Naive thymus-derived CD4-positive, alpha-beta T cell (primary cell): ENCODE measurements at regions of chr5 and their contacts with region 1.

Region 1: DNA sequence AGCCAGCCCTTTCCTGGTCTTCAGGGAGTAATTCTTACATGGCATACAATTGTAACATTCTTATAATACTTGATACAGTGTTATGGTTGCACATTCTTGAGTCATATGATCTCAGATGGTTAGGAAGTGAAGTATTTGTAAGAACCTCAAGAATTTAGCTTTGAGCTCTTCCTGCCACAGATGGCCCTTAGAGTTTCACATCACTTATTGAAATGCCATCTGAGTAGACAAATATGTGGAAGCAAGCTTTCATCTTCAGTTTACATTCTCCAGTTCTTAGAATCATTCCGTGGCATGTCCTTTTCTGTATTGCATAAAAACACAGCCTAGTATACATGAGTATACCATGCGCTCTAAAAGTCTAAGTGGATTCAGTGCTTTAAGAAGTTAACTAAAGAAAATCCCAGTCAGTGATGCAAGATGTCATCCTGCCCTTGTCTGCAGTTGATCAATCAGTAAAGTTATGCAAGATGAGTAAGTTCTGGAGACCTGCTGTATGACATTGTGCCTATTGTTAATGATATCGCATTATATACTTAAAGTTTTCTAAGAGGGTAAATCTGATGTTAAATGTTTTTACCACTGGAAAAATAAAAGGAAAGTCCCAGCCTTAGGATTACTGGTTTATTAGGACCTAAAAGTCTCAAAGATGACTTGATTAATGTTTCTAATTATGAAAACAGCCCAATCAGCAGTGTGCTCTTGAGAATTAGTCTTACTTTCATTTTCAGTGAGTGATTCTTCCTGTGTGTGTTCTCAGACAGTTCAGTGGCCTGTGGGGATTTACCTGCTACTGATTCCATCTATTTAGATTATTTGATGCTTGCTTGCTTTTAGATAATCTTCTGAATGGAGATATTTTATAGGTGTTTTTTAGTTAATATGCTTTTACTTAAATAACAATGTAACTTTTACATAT is 29.4 kb downstream of the RHOBTB3 start:
- DNase-seq: peak in 7 of 9 donors; percentile 3 to 45 (median 32)
- ATAC-seq: peak; percentile 83
- H3K4me3 ChIP-seq: peak overlapping the region; percentile 50
- H3K4me3 Mint-ChIP-seq: peak overlapping the region; percentile 70 to 86 (median 82)
- H3K27ac ChIP-seq: peak overlapping the region; percentile 58
- H3K27ac Mint-ChIP-seq: peak overlapping the region; percentile 75 to 92 (median 90)
- H3K4me1 ChIP-seq: peaks cover 0 to 27% of the 10 kb centered on the region in 2 donors
- H3K4me1 Mint-ChIP-seq: peaks cover 11 to 46% (median 32%) of the 10 kb centered on the region in 7 donors
- H3K27me3 ChIP-seq: no peaks in the 10 kb centered on the region
- H3K27me3 Mint-ChIP-seq: peaks cover 0 to 44% (median 0%) of the 10 kb centered on the region in 5 donors

Region 2: GRCh38 chr5:95718203-95718602 is 42.3 kb before region 1 on chr5:
- CTCF ChIA-PET with region 1: no interaction called
- POLR2A ChIA-PET with region 1: interaction called, 3 read pairs
- intact Hi-C with region 1: loop called in 1 of 2 experiments (anchors 5 kb)
- DNase-seq: peak in 6 of 9 donors; percentile 21 to 60 (median 40)
- ATAC-seq: peak; percentile 94
- H3K4me3 ChIP-seq: no peak overlapping the region
- H3K4me3 Mint-ChIP-seq: no peak overlapping the region
- H3K27ac ChIP-seq: no peak overlapping the region
- H3K27ac Mint-ChIP-seq: no peak overlapping the region
- H3K4me1 ChIP-seq: peaks cover 9 to 22% of the 10 kb centered on the region in 2 donors
- H3K4me1 Mint-ChIP-seq: peaks cover 8 to 29% (median 16%) of the 10 kb centered on the region in 7 donors
- H3K27me3 ChIP-seq: no peaks in the 10 kb centered on the region
- H3K27me3 Mint-ChIP-seq: peaks cover 0 to 34% (median 0%) of the 10 kb centered on the region in 5 donors

Region 3: DNA sequence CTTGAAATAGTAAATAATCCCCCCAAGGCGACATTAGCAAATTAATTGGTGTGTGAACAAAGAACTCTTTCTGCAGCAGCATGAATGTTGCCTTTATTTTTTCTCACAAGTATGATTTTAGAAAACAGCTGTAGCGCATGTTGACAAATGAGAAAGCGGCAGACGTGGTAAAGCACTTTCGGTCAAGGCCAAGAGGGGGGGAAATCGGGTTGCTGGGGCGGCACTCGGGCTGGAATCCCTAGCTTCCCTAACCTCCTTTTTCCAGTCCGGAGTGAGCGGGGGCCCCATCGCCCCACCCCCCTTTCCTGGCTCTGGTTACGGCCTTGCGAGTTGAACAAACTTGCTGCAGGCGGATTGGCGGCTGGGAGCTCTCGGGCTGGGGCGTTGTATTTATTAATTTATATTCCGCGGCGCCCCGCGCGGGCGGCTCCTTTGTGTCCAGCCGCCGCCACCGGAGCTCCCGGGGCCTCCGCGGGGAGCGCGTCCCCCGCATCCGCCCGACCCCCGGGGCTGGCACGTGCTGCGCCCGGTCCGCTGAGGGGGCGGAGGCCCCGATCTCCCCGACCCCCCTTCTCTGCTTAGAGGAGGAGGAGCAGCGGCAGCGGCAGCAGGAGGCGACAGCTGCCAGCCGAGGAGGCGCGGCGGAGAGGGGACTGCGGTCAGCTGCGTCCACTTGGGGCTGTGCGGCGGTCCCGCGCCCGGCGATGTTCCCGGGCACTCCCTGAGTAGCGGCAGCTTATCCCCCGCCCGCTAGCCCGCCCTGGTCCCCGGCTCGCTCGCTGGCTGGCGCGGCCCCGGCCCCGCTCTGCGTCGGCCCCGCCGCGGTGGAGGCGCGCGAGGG is 29.6 kb before region 1 on chr5 and contains the start of gene RHOBTB3:
- CTCF ChIA-PET with region 1: interaction called, 4 read pairs
- POLR2A ChIA-PET with region 1: no interaction called
- intact Hi-C with region 1: loop called (anchors 2 kb)
- DNase-seq: peak; percentile 20 to 58 (median 41)
- ATAC-seq: peak; percentile 77
- H3K4me3 ChIP-seq: peak within 1 kb of the TSS; percentile 64
- H3K4me3 Mint-ChIP-seq: peak within 1 kb of the TSS; percentile 83 to 94 (median 88)
- H3K27ac ChIP-seq: peak within 1 kb of the TSS; percentile 9
- H3K27ac Mint-ChIP-seq: peak within 1 kb of the TSS in 8 of 9 donors; percentile 30 to 88 (median 62)
- H3K4me1 ChIP-seq: peaks cover 0 to 20% of the 10 kb centered on the region in 2 donors
- H3K4me1 Mint-ChIP-seq: peaks cover 32 to 88% (median 63%) of the 10 kb centered on the region in 7 donors
- H3K27me3 ChIP-seq: peaks cover 4 to 6% of the 10 kb centered on the region in 2 donors
- H3K27me3 Mint-ChIP-seq: peaks cover 6 to 79% (median 13%) of the 10 kb centered on the region in 5 donors
- total RNA-seq, gene RHOBTB3: 0.24 to 9.6 (median 1.6) TPM

Region 4: GRCh38 chr5:95743232-95743631 is 17.3 kb before region 1 on chr5:
- CTCF ChIA-PET with region 1: no interaction called
- POLR2A ChIA-PET with region 1: no interaction called
- intact Hi-C with region 1: no loop called
- DNase-seq: no peak
- ATAC-seq: no peak
- H3K4me3 ChIP-seq: no peak overlapping the region
- H3K4me3 Mint-ChIP-seq: no peak overlapping the region
- H3K27ac ChIP-seq: no peak overlapping the region
- H3K27ac Mint-ChIP-seq: no peak overlapping the region
- H3K4me1 ChIP-seq: no peaks in the 10 kb centered on the region
- H3K4me1 Mint-ChIP-seq: peaks cover 4 to 21% (median 11%) of the 10 kb centered on the region in 7 donors
- H3K27me3 ChIP-seq: no peaks in the 10 kb centered on the region
- H3K27me3 Mint-ChIP-seq: peaks cover 0 to 39% (median 0%) of the 10 kb centered on the region in 5 donors

Region 5: DNA sequence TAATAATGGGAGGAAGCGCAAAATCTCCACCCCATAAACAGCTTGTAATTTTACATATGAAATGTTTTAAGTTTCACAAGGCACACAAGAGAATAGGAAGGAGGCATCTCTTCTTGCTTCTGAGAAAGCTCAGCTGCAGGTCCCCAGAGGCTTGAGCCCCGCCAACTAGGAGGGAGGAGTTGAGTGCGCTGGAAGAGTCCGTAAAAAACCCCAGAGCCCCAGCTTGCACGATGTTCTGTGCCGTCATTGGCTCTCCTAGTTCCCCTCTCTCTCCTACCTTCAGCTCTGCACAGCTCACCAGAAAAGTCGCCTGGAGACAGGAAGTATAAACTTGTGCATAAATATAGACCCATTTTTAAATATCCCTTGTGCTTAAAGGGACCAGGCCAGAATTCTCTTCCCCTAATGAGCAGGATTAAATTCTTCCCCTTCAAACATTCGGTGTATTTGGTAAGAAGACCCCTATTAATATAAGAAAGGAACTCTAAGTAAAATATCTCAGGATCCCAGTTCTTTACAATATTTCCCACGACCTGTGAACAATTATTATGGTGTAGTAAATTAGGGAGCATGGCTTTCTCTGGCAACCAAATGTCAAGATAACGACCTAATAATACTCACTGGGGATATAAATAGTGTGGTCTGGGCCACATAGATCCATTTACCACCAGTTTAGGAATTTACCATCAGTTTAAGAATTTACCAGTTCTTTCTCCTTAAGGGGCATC is 48.3 kb after region 1 on chr5:
- CTCF ChIA-PET with region 1: no interaction called
- POLR2A ChIA-PET with region 1: interaction called, 3 read pairs
- intact Hi-C with region 1: loop called in 1 of 2 experiments (anchors 2 kb)
- DNase-seq: peak; percentile 54 to 92 (median 88)
- ATAC-seq: peak; percentile 100
- H3K4me3 ChIP-seq: peak overlapping the region; percentile 24
- H3K4me3 Mint-ChIP-seq: peak overlapping the region; percentile 21 to 84 (median 76)
- H3K27ac ChIP-seq: peak overlapping the region; percentile 75
- H3K27ac Mint-ChIP-seq: peak overlapping the region; percentile 76 to 98 (median 90)
- H3K4me1 ChIP-seq: peaks cover 31 to 49% of the 10 kb centered on the region in 2 donors
- H3K4me1 Mint-ChIP-seq: peaks cover 53 to 71% (median 64%) of the 10 kb centered on the region in 7 donors
- H3K27me3 ChIP-seq: no peaks in the 10 kb centered on the region
- H3K27me3 Mint-ChIP-seq: no peaks in the 10 kb centered on the region

Region 6: DNA sequence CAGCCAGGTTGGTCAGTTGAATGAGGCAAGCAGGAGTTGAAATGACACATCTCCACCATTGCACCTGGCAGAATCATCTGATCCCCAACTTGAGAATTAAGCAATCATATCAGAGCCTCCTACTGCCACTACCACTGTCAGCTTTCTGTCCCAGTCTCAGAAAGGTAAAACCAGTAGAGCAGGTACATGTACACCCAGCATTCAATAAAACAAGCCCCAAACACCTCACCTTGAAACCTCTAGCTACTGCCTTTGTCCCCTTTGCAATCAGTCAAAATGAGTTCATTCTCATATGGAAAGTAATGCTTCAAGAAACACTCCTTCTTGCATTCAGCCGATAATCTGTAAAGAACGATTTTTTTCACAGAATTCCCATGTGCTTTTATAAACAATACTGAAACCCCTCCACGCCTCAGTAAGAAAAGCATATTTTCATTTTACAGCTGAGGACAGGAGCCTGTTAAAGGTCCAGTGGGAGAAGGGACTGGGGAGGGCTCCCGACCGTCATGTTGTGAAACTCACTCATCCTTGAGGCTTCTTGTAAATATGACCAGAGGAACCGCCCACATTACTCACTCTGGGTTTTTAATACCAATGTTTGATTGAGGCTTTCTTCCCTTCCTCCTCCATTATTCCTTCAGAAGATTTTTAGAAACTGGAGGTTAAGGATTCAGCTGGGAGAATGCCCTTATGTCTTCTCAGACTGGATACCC is 123.2 kb after region 1 on chr5:
- CTCF ChIA-PET with region 1: no interaction called
- POLR2A ChIA-PET with region 1: no interaction called
- intact Hi-C with region 1: no loop called
- DNase-seq: no peak
- ATAC-seq: no peak
- H3K4me3 ChIP-seq: no peak overlapping the region
- H3K4me3 Mint-ChIP-seq: no peak overlapping the region
- H3K27ac ChIP-seq: no peak overlapping the region
- H3K27ac Mint-ChIP-seq: peak overlapping the region in 1 of 9 donors; percentile 12
- H3K4me1 ChIP-seq: no peaks in the 10 kb centered on the region
- H3K4me1 Mint-ChIP-seq: peaks cover 0 to 1% (median 0%) of the 10 kb centered on the region in 7 donors
- H3K27me3 ChIP-seq: no peaks in the 10 kb centered on the region
- H3K27me3 Mint-ChIP-seq: no peaks in the 10 kb centered on the region

Region 7: GRCh38 chr5:96226941-96227552 is 466.5 kb after region 1 on chr5:
- CTCF ChIA-PET with region 1: no interaction called
- POLR2A ChIA-PET with region 1: no interaction called
- intact Hi-C with region 1: no loop called
- DNase-seq: no peak
- ATAC-seq: no peak
- H3K4me3 ChIP-seq: no peak overlapping the region
- H3K4me3 Mint-ChIP-seq: no peak overlapping the region
- H3K27ac ChIP-seq: no peak overlapping the region
- H3K27ac Mint-ChIP-seq: no peak overlapping the region
- H3K4me1 ChIP-seq: no peaks in the 10 kb centered on the region
- H3K4me1 Mint-ChIP-seq: peaks cover 0 to 2% (median 0%) of the 10 kb centered on the region in 7 donors
- H3K27me3 ChIP-seq: no peaks in the 10 kb centered on the region
- H3K27me3 Mint-ChIP-seq: peaks cover 5 to 35% (median 27%) of the 10 kb centered on the region in 5 donors